Stomach (tissue), 19 donors: ENCODE measurements at regions of chr14 and their contacts with region 1.

Region 1: DNA sequence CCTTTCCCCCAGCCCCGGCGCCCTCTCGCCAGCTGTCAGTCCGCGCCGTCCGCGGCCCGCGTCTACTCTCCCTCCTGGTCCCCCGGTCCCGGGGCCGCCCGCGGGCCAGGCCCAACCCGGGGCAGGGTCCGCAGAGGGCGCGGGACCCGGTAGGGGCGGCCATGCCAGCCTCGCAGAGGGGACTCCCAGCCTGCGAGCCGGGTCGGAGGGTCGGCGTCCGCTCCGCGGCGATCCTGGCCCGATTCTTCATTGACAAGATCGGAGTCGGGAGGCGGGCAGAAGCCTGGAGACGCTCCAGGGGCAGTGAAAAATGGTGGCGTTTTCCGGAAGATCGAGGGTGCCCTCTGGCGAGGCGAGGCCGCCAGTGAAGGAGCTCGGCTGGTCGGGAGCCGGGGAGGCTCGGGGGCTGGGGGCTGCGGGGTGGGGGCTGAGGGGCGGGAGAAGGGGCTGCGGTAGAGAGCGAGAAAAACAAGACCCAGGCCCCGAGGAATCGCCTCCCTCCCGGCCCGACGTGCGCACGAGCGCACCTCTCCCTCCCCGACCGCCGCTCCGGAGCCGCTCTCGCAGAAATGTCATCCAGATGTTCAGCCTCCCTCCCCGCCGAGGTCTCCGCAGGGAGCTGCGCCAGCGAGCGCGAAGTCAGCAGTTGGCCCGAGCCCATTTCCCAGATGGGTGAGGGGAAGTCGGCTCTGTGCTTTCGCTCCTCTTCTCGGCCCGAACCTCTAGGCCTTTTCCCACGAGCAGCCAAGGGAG is 647 bp upstream of the TGFB3 start:
- DNase-seq: peak; percentile 85 to 94
- H3K4me3 ChIP-seq: peak overlapping the region; percentile 65 to 76 (median 70)
- H3K27ac ChIP-seq: peak overlapping the region; percentile 93 to 98 (median 96)
- H3K4me1 ChIP-seq: peaks cover 42 to 80% (median 70%) of the 10 kb centered on the region in 4 donors
- H3K27me3 ChIP-seq: no peaks in the 10 kb centered on the region
- CTCF ChIP-seq: peak in 5 of 7 experiments; percentile 23 to 84 (median 62)
- EP300 ChIP-seq: no peak
- POLR2A ChIP-seq: no peak

Region 2: DNA sequence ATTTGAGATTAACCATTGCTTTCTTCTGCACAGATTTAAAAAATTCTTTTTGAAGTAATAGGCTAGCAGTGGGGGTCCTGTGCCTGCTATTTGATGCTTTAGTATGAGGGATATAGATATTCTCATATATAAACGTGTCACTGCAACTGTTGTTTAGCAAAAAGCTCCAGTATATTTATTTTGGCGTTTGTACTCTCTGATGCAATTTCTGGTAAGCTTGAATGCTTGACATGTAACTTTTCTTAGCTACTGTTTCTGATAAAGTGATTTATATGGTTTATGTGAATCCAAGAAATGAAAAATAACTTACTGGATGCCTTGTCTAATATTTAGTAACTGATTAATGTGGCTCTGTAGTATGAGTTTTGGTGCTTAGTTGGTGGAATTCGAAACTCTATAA is 244.2 kb before region 1 on chr14:
- intact Hi-C with region 1: no loop called
- DNase-seq: no peak
- H3K4me3 ChIP-seq: no peak overlapping the region
- H3K27ac ChIP-seq: no peak overlapping the region
- H3K4me1 ChIP-seq: no peaks in the 10 kb centered on the region
- H3K27me3 ChIP-seq: no peaks in the 10 kb centered on the region
- CTCF ChIP-seq: no peak
- EP300 ChIP-seq: no peak
- POLR2A ChIP-seq: no peak

Region 3: GRCh38 chr14:75800792-75801191 is 181.7 kb before region 1 on chr14:
- intact Hi-C with region 1: loop called (anchors 10 kb)
- DNase-seq: no peak
- H3K4me3 ChIP-seq: no peak overlapping the region
- H3K27ac ChIP-seq: no peak overlapping the region
- H3K4me1 ChIP-seq: no peaks in the 10 kb centered on the region
- H3K27me3 ChIP-seq: no peaks in the 10 kb centered on the region
- CTCF ChIP-seq: no peak
- EP300 ChIP-seq: no peak
- POLR2A ChIP-seq: no peak

Region 4: GRCh38 chr14:75884198-75884611 is 98.2 kb before region 1 on chr14:
- intact Hi-C with region 1: no loop called
- DNase-seq: no peak
- H3K4me3 ChIP-seq: no peak overlapping the region
- H3K27ac ChIP-seq: no peak overlapping the region
- H3K4me1 ChIP-seq: peaks cover 0 to 13% (median 0%) of the 10 kb centered on the region in 4 donors
- H3K27me3 ChIP-seq: no peaks in the 10 kb centered on the region
- CTCF ChIP-seq: no peak
- EP300 ChIP-seq: no peak
- POLR2A ChIP-seq: no peak

Region 5: GRCh38 chr14:75906676-75907280 is 75.7 kb before region 1 on chr14:
- intact Hi-C with region 1: loop called (anchors 5 kb)
- DNase-seq: peak; percentile 63 to 86
- H3K4me3 ChIP-seq: no peak overlapping the region
- H3K27ac ChIP-seq: peak overlapping the region in 4 of 5 donors; percentile 7 to 53 (median 42)
- H3K4me1 ChIP-seq: peaks cover 0 to 18% (median 7%) of the 10 kb centered on the region in 4 donors
- H3K27me3 ChIP-seq: no peaks in the 10 kb centered on the region
- CTCF ChIP-seq: peak in 5 of 7 experiments; percentile 36 to 98 (median 84)
- EP300 ChIP-seq: no peak
- POLR2A ChIP-seq: no peak